Right ventricle myocardium superior (tissue), 1 donor: ENCODE measurements at regions of chr2 and their contacts with region 1.

Region 1: DNA sequence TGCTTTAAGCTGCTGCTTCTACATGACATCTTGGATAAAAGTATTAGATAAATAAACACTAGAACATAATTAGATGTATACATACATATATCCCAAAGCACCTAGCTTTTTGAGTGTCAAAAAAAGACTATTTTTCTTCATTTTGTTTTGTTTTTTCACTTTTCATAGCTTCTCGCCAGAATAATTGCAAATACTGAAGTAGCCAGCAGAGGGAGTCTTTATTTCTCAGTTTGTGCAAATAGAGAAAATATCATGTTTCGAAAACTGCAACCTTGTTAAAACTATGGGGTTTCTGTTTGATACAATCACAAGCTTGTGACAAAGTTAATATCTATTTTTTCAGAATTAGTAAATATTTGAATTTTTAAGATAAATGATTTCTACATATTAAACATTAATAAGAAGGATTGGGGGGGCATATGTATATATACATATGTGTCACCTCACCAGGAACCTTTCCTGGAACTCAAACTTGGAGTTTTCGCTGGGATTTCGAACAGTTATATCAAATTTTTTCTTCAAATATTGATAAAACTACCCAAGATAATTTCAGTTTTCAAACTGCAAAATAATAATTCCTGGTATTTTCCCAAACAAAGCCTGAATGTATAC is 61.0 kb downstream of the GRB14 start:
- DNase-seq: no peak
- ATAC-seq: peak; percentile 57

Region 2: GRCh38 chr2:164599966-164600589 is 39.8 kb after region 1 on chr2:
- intact Hi-C with region 1: loop called (anchors 5 kb)
- DNase-seq: no peak
- ATAC-seq: peak; percentile 88

Region 3: GRCh38 chr2:164710837-164711765 is 150.8 kb after region 1 on chr2:
- intact Hi-C with region 1: loop called (anchors 5 kb)
- DNase-seq: no peak
- ATAC-seq: no peak